ENCODE measurements at regions of chr3 and their contacts with region 1.

Region 1: GRCh38 chr3:197305854-197306253 is 7.4 kb upstream of the DLG1 start:
- DNase-seq: peak in 3 of 35 experiments; percentile 5 to 57 (median 14)
- ATAC-seq: peak; percentile 40 to 86 (median 60)
- H3K4me3 ChIP-seq: no peak overlapping the region
- H3K4me3 Mint-ChIP-seq: no peak overlapping the region
- H3K27ac ChIP-seq: no peak overlapping the region
- H3K27ac Mint-ChIP-seq: no peak overlapping the region
- H3K4me1 ChIP-seq: peaks cover 3% of the 10 kb centered on the region in 2 experiments
- H3K4me1 Mint-ChIP-seq: peaks cover 6 to 10% (median 10%) of the 10 kb centered on the region in 3 donors
- H3K27me3 ChIP-seq: no peaks in the 10 kb centered on the region
- H3K27me3 Mint-ChIP-seq: peaks cover 2 to 6% of the 10 kb centered on the region in 2 donors

Region 2: DNA sequence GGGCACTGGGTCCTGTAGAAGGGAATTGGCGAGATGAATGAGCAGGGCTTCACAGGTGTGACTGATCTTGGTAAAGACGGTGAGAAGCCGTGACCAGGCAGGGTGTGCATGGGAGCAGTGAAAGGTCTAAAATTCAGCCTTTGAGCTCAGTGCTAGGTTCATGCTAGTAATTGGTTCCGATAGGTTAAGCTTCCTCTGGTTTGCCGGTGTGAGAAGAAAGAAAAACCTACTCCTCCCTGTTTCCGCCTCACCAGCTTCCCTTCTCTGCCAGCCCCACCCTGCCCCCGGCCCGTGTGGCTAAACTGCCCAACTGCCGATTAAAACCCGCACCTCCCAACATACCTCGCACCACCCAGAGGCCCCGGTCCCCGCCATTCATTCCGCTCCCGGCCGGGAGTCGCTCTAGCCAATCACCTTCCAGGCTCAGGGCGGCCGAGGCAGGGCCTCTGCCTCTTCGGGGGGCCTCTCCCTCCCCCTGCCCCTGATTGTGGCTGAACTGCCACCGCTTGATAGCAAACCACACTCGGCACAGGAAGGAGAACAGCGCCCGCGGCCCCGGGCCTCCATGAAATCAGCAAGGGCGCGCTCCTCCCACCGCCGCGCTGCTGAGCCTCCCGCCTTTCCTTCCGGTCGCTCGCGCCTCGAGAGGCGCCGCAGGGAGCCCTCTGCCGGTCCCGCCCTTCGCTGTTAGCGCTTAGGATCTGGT is 673.7 kb before region 1 on chr3:
- CTCF ChIA-PET with region 1: no interaction called
- POLR2A ChIA-PET with region 1: interaction called in 1 of 2 experiments, 12 read pairs
- DNase-seq: peak; percentile 79 to 94 (median 88)
- ATAC-seq: peak; percentile 86 to 89 (median 88)
- H3K4me3 ChIP-seq: peak overlapping the region; percentile 38 to 66
- H3K4me3 Mint-ChIP-seq: peak overlapping the region; percentile 81 to 88 (median 86)
- H3K27ac ChIP-seq: peak overlapping the region; percentile 78
- H3K27ac Mint-ChIP-seq: peak overlapping the region; percentile 95 to 98
- H3K4me1 ChIP-seq: peaks cover 35 to 77% of the 10 kb centered on the region in 2 experiments
- H3K4me1 Mint-ChIP-seq: peaks cover 56 to 64% (median 63%) of the 10 kb centered on the region in 3 donors
- H3K27me3 ChIP-seq: no peaks in the 10 kb centered on the region
- H3K27me3 Mint-ChIP-seq: no peaks in the 10 kb centered on the region

Region 3: GRCh38 chr3:197682713-197683112 is 376.9 kb after region 1 on chr3:
- CTCF ChIA-PET with region 1: no interaction called
- POLR2A ChIA-PET with region 1: no interaction called
- DNase-seq: peak in 1 of 35 experiments; percentile 6
- ATAC-seq: no peak
- H3K4me3 ChIP-seq: no peak overlapping the region
- H3K4me3 Mint-ChIP-seq: no peak overlapping the region
- H3K27ac ChIP-seq: no peak overlapping the region
- H3K27ac Mint-ChIP-seq: no peak overlapping the region
- H3K4me1 ChIP-seq: no peaks in the 10 kb centered on the region
- H3K4me1 Mint-ChIP-seq: no peaks in the 10 kb centered on the region
- H3K27me3 ChIP-seq: no peaks in the 10 kb centered on the region
- H3K27me3 Mint-ChIP-seq: no peaks in the 10 kb centered on the region